Heart right ventricle (tissue), 16 donors: ENCODE measurements at regions of chr11 and their contacts with region 1.

Region 1: DNA sequence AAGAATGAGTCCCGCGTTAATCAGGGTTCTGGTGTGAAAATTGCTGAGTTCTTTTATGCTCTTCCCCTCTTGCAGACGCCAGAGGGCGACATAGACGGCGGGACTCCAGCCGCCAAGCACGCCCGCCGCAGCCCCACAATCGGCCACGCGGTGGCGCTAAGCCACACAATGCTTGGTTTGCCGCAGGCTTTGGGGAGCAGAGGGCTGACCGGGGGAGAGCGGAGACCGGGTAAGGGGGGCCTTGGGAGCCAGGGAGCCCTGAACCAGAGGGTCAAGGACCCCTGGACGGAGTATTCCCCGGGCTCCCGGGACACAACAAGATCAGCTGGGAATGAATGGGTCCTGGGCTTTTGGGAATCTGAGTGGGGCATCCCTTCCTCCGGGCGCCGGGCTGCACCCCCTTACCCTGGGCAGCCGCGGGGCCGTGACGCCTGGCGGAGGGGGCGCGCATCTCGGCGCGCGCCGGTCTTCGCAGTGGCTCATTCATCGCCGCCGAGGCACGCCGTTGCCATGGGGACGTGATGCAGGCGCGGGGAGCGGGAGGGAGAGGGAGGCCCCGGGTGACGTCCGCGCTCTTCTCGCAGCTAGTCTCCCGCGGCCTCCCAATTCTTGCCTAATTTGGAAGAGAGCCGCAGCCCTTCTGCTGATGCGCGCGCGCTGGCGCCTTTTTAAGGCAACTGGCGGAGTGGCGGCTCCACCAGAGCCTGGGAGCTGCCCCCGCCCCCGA is 12.2 kb upstream of the NPAS4 start:
- DNase-seq: peak; percentile 87 to 89
- ATAC-seq: peak; percentile 85 to 95 (median 91)
- H3K4me3 ChIP-seq: peak overlapping the region; percentile 9 to 53 (median 47)
- H3K27ac ChIP-seq: peak overlapping the region in 3 of 10 donors; percentile 18 to 49 (median 40)
- H3K4me1 ChIP-seq: peaks cover 0 to 11% (median 7%) of the 10 kb centered on the region in 9 donors
- H3K27me3 ChIP-seq: peaks cover 0 to 37% (median 20%) of the 10 kb centered on the region in 7 donors
- CTCF ChIP-seq: peak; percentile 100

Region 2: DNA sequence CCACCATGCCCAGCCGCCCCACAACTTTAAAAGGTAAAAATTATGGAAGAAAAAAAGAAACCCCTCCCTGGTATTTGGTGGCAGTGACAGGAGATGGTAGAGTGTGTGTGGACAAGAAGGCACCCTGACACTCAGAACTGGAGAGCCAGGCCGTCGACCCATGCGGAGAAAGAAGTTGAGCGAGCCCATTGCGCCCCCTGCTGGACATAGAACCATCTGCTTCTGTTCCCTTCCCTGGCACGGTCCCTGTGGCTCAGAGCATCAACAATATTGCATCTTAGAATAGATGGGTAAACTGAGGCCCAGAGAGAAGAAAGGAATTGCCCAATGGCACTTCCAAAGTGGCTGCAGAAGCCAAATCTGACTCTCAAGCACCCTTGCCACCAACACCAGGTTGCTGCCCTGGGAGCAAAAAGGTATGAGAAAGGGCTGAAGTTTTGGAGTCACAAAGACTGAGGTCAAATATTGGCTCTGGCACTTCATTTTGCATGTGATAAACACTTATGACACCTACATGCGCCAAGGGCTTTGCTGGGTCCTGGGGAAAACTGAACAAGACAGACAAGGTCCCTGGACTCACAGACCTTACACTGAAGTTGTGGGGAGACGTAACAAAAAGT is 21.4 kb after region 1 on chr11:
- intact Hi-C with region 1: loop called in 5 of 10 experiments (anchors 1 to 2 kb)
- DNase-seq: peak; percentile 54 to 68
- ATAC-seq: peak; percentile 64 to 91 (median 76)
- H3K4me3 ChIP-seq: no peak overlapping the region
- H3K27ac ChIP-seq: no peak overlapping the region
- H3K4me1 ChIP-seq: no peaks in the 10 kb centered on the region
- H3K27me3 ChIP-seq: no peaks in the 10 kb centered on the region
- CTCF ChIP-seq: peak; percentile 59 to 88 (median 73)

Region 3: GRCh38 chr11:66438504-66439466 is 30.1 kb after region 1 on chr11 and contains the start of gene MRPL11:
- intact Hi-C with region 1: loop called in 1 of 10 experiments (anchors 2 kb)
- DNase-seq: peak; percentile 88 to 92
- ATAC-seq: peak; percentile 99 to 100 (median 99)
- H3K4me3 ChIP-seq: peak within 1 kb of the TSS; percentile 74 to 96 (median 83)
- H3K27ac ChIP-seq: peak within 1 kb of the TSS; percentile 39 to 95 (median 82)
- H3K4me1 ChIP-seq: peaks cover 3 to 12% (median 10%) of the 10 kb centered on the region in 9 donors
- H3K27me3 ChIP-seq: no peaks in the 10 kb centered on the region
- CTCF ChIP-seq: peak; percentile 31 to 87 (median 68)
- total RNA-seq, gene MRPL11: 37.2 to 57.2 (median 48.2) TPM

Region 4: DNA sequence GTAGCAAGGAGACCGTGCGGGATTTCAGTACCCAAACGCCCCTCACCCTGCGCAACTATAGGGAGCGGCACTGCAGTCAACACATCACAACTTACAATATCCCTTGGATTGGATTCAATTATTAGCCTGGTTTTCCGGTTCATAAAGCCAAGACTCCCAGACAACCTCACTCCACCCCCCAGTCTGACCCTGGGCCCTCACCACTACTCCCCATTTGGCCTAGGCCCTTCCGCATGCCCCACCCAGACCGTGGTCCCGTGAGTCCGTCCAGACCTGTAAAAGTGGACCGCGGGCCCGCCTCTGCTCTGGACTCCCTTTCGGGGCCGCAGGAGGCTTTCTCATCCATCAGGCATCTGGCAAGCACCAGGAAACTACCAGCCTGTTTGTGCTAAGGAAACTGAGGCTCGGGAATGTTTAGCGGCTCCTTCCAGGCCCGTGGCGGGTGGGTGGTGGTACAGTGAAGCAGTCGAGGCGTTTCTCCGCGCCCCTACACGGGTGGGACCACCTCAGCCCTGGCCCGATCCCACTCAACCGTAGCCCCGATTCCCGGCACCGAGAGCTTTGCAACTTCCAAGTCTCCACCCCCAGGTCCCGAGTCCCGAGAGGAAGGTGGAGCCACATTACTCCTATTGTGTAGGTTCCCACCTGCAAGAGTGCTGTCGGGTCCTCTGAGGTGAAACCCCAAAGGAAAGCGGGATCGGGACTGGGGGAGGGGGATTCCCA is 70.9 kb after region 1 on chr11:
- intact Hi-C with region 1: loop called in 2 of 10 experiments (anchors 2 to 5 kb)
- DNase-seq: peak; percentile 40 to 47
- ATAC-seq: peak; percentile 23 to 53 (median 33)
- H3K4me3 ChIP-seq: peak overlapping the region; percentile 68 to 98 (median 77)
- H3K27ac ChIP-seq: peak overlapping the region; percentile 67 to 96 (median 92)
- H3K4me1 ChIP-seq: peaks cover 0 to 22% (median 17%) of the 10 kb centered on the region in 9 donors
- H3K27me3 ChIP-seq: no peaks in the 10 kb centered on the region
- CTCF ChIP-seq: no peak

Region 5: DNA sequence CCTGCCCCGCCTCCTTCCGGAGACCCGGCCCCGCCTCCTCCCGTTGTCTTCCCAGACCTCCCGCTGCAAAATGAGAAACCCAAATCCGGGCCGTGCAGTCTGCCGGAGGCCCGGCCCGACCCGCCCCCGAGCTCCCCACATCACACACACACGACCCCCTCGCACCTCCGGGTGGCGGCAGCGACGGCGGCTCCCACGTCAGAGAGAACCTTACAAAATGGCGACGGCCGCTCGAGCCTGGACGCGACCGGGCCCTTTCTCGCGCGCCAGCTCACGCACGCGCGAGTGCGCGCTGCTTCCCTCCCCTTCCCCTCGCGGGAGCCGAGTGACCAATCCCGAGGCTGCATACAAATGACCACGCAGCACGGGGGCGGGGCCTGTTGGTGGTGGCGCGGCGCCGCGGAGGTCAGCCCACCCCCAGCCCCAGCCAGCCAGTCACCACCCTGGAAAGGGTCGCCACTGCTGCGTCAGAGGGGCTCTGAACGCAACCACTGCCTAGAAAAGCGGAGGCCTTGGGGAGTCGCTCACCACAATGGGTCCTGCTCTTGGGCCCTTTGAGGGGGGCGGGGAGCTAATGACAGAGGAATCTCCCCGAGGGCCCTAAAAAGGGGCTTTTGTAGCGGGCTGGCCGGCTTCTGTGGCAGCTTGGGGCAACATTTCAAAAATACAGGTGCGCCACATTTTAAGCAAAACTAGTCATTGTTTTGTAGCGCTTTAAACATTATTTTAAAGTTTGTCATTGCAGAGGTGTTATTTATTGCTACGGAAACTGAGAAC is 269.1 kb after region 1 on chr11 and contains the start of gene RBM4B:
- intact Hi-C with region 1: loop called in 9 of 10 experiments (anchors 1 to 10 kb)
- DNase-seq: peak; percentile 97 to 98
- ATAC-seq: peak; percentile 98 to 99 (median 99)
- H3K4me3 ChIP-seq: peak within 1 kb of the TSS; percentile 52 to 94 (median 72)
- H3K27ac ChIP-seq: peak within 1 kb of the TSS; percentile 86 to 98 (median 92)
- H3K4me1 ChIP-seq: peaks cover 7 to 55% (median 38%) of the 10 kb centered on the region in 9 donors
- H3K27me3 ChIP-seq: no peaks in the 10 kb centered on the region
- CTCF ChIP-seq: no peak
- total RNA-seq, gene RBM4B: 5.7 to 12.6 (median 9.2) TPM

Region 6: DNA sequence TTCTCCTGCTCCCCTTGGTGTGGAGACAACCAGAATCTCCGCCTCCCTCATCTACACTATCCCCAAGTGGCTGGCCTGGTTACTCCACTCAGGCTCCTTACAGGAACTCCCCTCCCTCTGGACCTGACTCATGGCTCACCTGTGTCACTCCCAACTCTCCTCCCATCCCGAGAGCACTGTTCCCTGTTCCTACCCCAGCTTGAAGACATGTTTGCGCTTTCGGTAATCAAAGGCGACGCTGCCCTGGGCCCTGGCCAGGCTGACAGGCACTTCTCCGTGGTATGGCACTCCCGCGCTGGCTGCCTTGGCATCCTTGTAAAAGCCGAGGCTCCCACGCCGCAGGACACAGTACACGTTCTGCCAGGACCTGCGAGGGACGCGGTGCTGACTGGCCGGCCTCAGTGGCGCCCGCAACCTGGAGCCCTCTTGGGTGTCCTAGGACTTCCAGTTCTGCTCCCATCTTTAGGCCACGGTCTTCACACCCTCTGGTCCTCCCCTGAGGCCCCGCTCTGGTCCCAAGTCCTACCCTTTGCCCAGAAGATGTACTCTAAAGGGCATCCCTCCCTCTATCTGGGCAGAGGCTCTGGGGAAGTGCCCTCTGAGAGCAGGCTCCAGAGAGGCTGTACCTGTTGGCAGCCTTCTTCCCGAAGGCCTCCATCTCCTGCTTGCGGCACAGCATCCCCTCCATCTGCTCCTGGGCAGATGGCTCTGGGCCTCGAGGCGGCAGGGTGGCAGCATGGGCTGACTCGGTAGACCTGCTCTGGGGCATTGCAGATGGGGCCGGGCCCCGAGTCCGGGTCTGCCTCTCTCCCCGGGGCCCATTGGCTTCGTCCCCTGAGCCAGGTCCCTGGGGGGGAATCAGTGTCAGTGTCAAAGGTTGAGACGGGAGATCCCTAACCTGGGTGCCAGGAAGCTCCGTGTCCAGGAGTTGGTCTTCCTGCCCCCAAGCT is 278.4 kb after region 1 on chr11:
- intact Hi-C with region 1: loop called in 3 of 10 experiments (anchors 10 kb)
- DNase-seq: no peak
- ATAC-seq: peak in 4 of 8 donors; percentile 9 to 44 (median 26)
- H3K4me3 ChIP-seq: no peak overlapping the region
- H3K27ac ChIP-seq: no peak overlapping the region
- H3K4me1 ChIP-seq: no peaks in the 10 kb centered on the region
- H3K27me3 ChIP-seq: no peaks in the 10 kb centered on the region
- CTCF ChIP-seq: no peak

Region 7: DNA sequence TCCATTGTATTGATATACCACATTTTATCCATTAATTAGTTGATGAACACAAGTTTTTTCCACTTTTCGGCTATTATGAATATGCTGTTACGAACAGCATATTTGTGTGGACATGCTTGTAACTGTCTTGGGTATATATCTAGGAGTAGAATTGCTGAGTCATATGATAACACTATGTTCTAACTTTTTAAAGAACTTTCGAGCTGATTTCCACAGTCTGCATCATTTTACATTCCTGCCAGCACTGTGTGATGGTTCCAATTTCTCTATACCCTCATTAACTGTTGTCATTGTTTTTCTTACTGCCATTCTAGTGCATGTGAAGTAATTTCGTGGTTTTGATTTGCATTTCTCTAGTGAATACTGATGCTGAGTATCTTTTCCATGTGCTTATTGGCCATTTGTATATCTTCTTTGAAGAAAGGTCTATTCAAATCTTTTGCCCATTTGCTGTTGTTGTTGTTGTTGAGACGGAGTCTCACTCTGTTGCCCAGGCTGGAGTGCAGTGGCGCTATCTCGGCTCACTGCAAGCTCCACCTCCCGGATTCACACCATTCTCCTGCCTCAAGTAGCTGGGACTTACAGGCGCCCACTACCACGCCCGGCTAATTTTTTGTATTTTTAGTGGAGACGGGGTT is 427.2 kb after region 1 on chr11:
- intact Hi-C with region 1: loop called in 7 of 10 experiments (anchors 2 to 10 kb)
- DNase-seq: no peak
- ATAC-seq: no peak
- H3K4me3 ChIP-seq: no peak overlapping the region
- H3K27ac ChIP-seq: no peak overlapping the region
- H3K4me1 ChIP-seq: peaks cover 0 to 8% (median 0%) of the 10 kb centered on the region in 9 donors
- H3K27me3 ChIP-seq: no peaks in the 10 kb centered on the region
- CTCF ChIP-seq: no peak